Mucosa of descending colon (tissue), 3 donors: ENCODE measurements at regions of chr12 and their contacts with region 1.

Region 1: GRCh38 chr12:47779301-47779942 is 6.4 kb downstream of the SLC48A1 start:
- DNase-seq: peak; percentile 86 to 94 (median 93)
- ATAC-seq: peak; percentile 88
- H3K4me3 ChIP-seq: no peak overlapping the region
- H3K4me1 ChIP-seq: peaks cover 6% of the 10 kb centered on the region
- CTCF ChIP-seq: peak; percentile 87

Region 2: GRCh38 chr12:47356129-47356700 is 423.2 kb before region 1 on chr12:
- intact Hi-C with region 1: no loop called
- DNase-seq: peak in 1 of 3 donors; percentile 6
- ATAC-seq: peak; percentile 67
- H3K4me3 ChIP-seq: no peak overlapping the region
- H3K4me1 ChIP-seq: no peaks in the 10 kb centered on the region
- CTCF ChIP-seq: no peak

Region 3: GRCh38 chr12:47377414-47378221 is 401.8 kb before region 1 on chr12:
- intact Hi-C with region 1: no loop called
- DNase-seq: peak; percentile 69 to 87 (median 75)
- ATAC-seq: peak; percentile 78
- H3K4me3 ChIP-seq: no peak overlapping the region
- H3K4me1 ChIP-seq: no peaks in the 10 kb centered on the region
- CTCF ChIP-seq: no peak

Region 4: DNA sequence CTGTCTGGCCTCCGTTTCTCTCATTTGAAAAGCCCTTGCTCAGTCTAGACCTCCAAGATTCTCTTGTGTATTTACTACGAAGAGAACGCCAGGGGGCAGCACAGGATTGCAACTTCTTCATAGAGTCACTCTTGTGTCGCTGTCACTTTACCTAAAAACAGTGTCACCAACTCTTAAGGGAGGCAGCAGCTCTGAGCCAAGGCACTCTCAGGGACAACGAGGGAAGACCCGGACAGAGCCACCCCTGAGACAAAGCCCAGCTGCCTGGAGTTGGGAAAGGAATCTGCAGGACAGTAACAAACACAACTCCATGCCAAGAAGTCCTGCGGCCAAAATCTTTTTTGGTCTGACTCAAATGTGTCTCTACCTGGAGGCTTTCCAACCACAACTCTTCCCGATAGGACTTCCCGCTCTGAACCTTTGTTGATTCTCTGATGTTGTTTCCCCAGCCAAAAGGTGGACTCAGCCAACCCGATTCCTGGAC is 64.0 kb before region 1 on chr12:
- intact Hi-C with region 1: loop called (anchors 2 to 10 kb)
- DNase-seq: peak in 2 of 3 donors; percentile 60 to 79
- ATAC-seq: peak; percentile 65
- H3K4me3 ChIP-seq: no peak overlapping the region
- H3K4me1 ChIP-seq: peaks cover 11% of the 10 kb centered on the region
- CTCF ChIP-seq: peak; percentile 63

Region 5: GRCh38 chr12:47725893-47726292 is 53.5 kb before region 1 on chr12:
- intact Hi-C with region 1: loop called in 1 of 2 experiments (anchors 10 kb)
- DNase-seq: no peak
- ATAC-seq: peak; percentile 34
- H3K4me3 ChIP-seq: no peak overlapping the region
- H3K4me1 ChIP-seq: no peaks in the 10 kb centered on the region
- CTCF ChIP-seq: no peak

Region 6: DNA sequence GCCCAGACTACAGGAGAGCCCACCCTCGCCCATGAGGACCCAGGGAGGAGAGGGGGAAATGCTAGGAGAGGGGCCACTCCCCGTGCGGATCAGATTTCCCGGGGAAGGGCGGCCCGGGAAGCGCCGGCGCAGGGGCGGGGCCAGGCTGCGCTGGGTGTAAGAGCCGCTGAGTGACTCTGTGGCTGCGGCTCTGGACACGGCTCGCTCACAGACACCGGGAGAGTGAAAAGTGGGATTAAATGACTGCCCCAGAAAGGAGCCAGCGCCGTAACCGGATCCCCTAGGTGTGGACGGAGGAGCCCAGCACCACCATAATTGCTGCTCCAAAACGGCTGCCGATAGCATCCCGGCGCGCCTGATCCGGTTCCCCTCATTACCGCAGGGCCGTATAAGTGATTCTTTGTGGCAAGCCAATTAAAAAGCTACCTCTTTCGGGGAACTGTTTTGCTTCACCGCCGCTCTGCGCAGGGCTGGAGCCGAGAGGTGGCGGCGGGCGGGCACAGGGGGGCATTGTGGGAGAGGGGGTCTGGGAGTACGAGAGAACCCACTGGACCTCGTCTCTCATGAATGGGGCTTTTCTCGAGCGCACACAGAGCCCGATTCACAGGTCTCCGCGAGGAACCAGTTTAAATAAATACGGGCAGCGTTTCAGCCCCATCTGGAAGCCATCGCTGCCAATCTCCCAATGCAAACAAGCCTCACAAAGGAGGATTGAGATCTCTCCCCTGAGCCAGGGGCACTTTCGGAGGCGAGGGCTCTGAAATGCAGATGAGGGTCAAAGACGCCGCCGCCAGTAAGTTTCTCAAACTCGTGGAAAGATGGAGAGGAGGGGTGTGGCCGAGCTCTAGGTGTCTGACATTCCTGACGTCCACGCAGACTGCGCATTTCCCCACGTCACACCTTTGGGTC is 222.3 kb after region 1 on chr12:
- intact Hi-C with region 1: no loop called
- DNase-seq: peak in 2 of 3 donors; percentile 65
- ATAC-seq: peak; percentile 85
- H3K4me3 ChIP-seq: no peak overlapping the region
- H3K4me1 ChIP-seq: peaks cover 38% of the 10 kb centered on the region
- CTCF ChIP-seq: no peak